ENCODE measurements at regions of chr14 and their contacts with region 1.

Region 1: GRCh38 chr14:96100161-96101029 is 61.2 kb downstream of the C14orf132 start:
- DNase-seq: peak; percentile 92
- ATAC-seq: peak; percentile 73
- H3K4me3 Mint-ChIP-seq: no peak overlapping the region
- H3K27ac Mint-ChIP-seq: no peak overlapping the region
- H3K4me1 Mint-ChIP-seq: peaks cover 14% of the 10 kb centered on the region
- H3K27me3 Mint-ChIP-seq: no peaks in the 10 kb centered on the region
- CTCF ChIP-seq: peak; percentile 65

Region 2: DNA sequence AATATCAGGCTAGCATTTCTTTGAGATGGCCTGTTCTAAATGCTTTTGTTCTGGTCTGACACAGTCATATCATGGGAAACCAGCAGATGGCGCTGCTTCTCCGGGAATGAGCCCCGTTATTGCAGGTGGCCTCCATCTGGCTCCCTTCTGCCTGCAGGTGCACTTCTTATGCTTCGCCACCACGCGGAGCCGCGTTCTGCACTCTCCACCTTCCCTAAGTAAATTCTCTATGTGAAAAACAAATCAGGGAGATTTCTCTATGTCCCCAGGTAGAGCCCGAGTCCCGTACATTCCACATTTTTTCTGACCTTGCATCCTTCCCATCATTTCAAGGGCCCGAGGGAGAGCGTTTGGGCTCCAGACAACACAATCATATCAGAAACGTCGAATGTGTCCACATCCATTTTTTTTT is 539.4 kb before region 1 on chr14:
- CTCF ChIA-PET with region 1: interaction called, 23 read pairs
- POLR2A ChIA-PET with region 1: no interaction called
- DNase-seq: peak; percentile 96
- ATAC-seq: peak; percentile 89
- H3K4me3 Mint-ChIP-seq: no peak overlapping the region
- H3K27ac Mint-ChIP-seq: no peak overlapping the region
- H3K4me1 Mint-ChIP-seq: peaks cover 36% of the 10 kb centered on the region
- H3K27me3 Mint-ChIP-seq: peaks cover 35% of the 10 kb centered on the region
- CTCF ChIP-seq: peak; percentile 96

Region 3: GRCh38 chr14:95993768-95994592 is 106.4 kb before region 1 on chr14:
- CTCF ChIA-PET with region 1: interaction called, 41 read pairs
- POLR2A ChIA-PET with region 1: no interaction called
- DNase-seq: no peak
- ATAC-seq: peak; percentile 79
- H3K4me3 Mint-ChIP-seq: no peak overlapping the region
- H3K27ac Mint-ChIP-seq: peak overlapping the region; percentile 74; the same call in 1 of the 2 replicates
- H3K4me1 Mint-ChIP-seq: peaks cover 19% of the 10 kb centered on the region
- H3K27me3 Mint-ChIP-seq: peaks cover 9% of the 10 kb centered on the region
- CTCF ChIP-seq: peak; percentile 89

Region 4: DNA sequence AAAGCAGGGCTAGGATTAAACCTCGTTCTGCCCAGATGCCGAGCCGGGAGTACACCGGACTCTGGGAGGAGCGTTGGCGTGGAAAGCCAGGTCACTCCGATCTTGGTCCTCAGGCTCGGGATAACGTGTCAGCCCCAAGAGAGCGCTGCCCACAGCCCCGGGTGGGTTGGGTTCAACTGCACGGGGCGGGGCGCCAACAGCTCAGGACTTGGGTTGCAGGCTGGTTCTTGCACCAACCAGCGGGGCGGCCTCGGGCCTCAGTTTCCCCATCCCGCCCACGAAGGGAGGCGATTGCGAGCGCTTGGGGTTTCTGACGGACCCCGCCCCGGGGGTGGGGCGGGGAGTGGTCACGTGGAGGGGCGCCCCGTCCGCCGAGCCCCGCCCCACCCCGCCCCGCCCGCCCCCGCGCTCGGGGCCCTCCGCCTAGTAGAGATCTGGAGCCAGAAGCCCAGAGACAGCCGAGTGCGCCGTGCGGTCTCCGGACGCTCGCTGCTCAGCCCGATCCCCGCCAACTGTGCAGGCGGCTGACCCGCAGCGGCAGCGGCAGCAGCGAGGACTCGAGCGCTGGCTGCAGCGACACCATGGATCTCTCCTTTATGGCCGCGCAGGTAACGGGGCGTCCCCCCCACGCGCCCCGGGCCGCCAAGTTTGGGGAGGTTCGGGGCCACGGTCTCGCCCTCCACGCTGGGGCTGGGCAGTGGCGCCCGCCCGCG is 61.3 kb before region 1 on chr14 and contains the start of gene C14orf132:
- CTCF ChIA-PET with region 1: interaction called, 14 read pairs
- POLR2A ChIA-PET with region 1: no interaction called
- DNase-seq: peak; percentile 72
- ATAC-seq: peak; percentile 87
- H3K4me3 Mint-ChIP-seq: peak within 1 kb of the TSS; percentile 81
- H3K27ac Mint-ChIP-seq: no peak within 1 kb of the TSS
- H3K4me1 Mint-ChIP-seq: peaks cover 25% of the 10 kb centered on the region
- H3K27me3 Mint-ChIP-seq: peaks cover 57% of the 10 kb centered on the region
- CTCF ChIP-seq: no peak
- total RNA-seq, gene C14orf132: 14.1 to 17.6 TPM (median 16.0 TPM) in 3 replicates

Region 5: GRCh38 chr14:96065664-96066459 is 34.5 kb before region 1 on chr14:
- CTCF ChIA-PET with region 1: interaction called, 15 read pairs
- POLR2A ChIA-PET with region 1: interaction called, 4 read pairs
- DNase-seq: no peak
- ATAC-seq: peak; percentile 67
- H3K4me3 Mint-ChIP-seq: no peak overlapping the region
- H3K27ac Mint-ChIP-seq: no peak overlapping the region
- H3K4me1 Mint-ChIP-seq: peaks cover 2% of the 10 kb centered on the region; the same call in 1 of the 2 replicates
- H3K27me3 Mint-ChIP-seq: no peaks in the 10 kb centered on the region
- CTCF ChIP-seq: no peak

Region 6: DNA sequence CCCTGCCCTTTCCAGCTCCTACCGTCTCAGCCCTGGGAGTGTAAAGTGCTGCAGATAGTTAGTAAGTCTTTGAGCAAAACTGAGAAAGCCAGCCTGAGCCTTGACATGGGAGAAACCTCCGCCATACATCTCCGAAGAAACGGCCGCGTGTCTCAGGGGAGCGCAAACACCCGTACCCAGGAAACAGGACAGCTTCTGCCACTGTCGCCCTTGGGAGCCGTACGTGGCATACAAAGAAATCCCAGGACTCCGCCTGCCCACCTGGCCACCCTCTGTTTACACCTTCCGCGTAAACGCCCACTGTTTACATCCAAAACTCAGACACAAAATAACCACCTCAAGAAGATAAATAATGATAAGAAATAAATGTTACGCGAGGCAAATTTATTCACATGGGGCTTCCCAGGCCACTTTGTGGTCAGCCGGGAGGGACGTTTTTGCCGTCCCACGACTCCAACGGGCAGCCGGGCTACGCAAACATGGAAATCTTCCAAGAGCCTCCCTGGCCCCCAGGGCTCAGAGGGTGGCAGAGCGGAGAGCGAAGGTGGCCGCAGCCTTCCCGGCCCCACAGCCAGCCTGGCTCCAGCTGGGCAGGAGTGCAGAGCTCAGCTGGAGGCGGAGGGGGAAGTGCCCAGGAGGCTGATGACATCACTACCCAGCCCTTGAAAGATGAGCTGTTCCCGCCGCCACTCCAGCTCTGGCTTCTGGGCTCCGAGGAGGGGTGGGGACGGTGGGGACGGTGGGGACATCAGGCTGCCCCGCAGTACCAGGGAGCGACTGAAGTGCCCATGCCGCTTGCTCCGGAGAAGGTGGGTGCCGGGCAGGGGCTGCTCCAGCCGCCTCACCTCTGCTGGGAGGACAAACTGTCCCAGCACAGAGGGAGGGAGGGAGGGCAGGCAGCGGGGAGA is 104.0 kb after region 1 on chr14 and contains the start of gene BDKRB2:
- CTCF ChIA-PET with region 1: interaction called, 19 read pairs
- POLR2A ChIA-PET with region 1: no interaction called
- DNase-seq: peak; percentile 65
- ATAC-seq: peak; percentile 82
- H3K4me3 Mint-ChIP-seq: peak within 1 kb of the TSS; percentile 64
- H3K27ac Mint-ChIP-seq: no peak within 1 kb of the TSS
- H3K4me1 Mint-ChIP-seq: peaks cover 18% of the 10 kb centered on the region
- H3K27me3 Mint-ChIP-seq: peaks cover 30% of the 10 kb centered on the region
- CTCF ChIP-seq: no peak
- total RNA-seq, gene BDKRB2: 0.17 to 0.30 TPM (median 0.18 TPM) in 3 replicates

Region 7: GRCh38 chr14:96285667-96286066 is 185.3 kb after region 1 on chr14:
- CTCF ChIA-PET with region 1: interaction called, 11 read pairs
- POLR2A ChIA-PET with region 1: no interaction called
- DNase-seq: no peak
- ATAC-seq: no peak
- H3K4me3 Mint-ChIP-seq: no peak overlapping the region
- H3K27ac Mint-ChIP-seq: peak overlapping the region; percentile 62
- H3K4me1 Mint-ChIP-seq: no peaks in the 10 kb centered on the region
- H3K27me3 Mint-ChIP-seq: no peaks in the 10 kb centered on the region
- CTCF ChIP-seq: no peak